Vagina (tissue), 2 donors: ENCODE measurements at regions of chr7 and their contacts with region 1.

Region 1: GRCh38 chr7:100691676-100692577 is 2.1 kb downstream of the GIGYF1 start:
- DNase-seq: peak in 1 of 2 donors; percentile 94
- H3K4me3 ChIP-seq: peak overlapping the region; percentile 91 to 100
- H3K27ac ChIP-seq: peak overlapping the region; percentile 95
- H3K4me1 ChIP-seq: peaks cover 68% of the 10 kb centered on the region
- H3K27me3 ChIP-seq: no peaks in the 10 kb centered on the region
- CTCF ChIP-seq: peak; percentile 66 to 85 (median 81)
- POLR2A ChIP-seq: no peak

Region 2: GRCh38 chr7:100469227-100470044 is 222.5 kb before region 1 on chr7:
- intact Hi-C with region 1: loop called (anchors 5 kb)
- DNase-seq: no peak
- H3K4me3 ChIP-seq: no peak overlapping the region
- H3K27ac ChIP-seq: peak overlapping the region; percentile 42
- H3K4me1 ChIP-seq: peaks cover 62% of the 10 kb centered on the region
- H3K27me3 ChIP-seq: no peaks in the 10 kb centered on the region
- CTCF ChIP-seq: peak; percentile 95 to 98 (median 96)
- POLR2A ChIP-seq: no peak

Region 3: DNA sequence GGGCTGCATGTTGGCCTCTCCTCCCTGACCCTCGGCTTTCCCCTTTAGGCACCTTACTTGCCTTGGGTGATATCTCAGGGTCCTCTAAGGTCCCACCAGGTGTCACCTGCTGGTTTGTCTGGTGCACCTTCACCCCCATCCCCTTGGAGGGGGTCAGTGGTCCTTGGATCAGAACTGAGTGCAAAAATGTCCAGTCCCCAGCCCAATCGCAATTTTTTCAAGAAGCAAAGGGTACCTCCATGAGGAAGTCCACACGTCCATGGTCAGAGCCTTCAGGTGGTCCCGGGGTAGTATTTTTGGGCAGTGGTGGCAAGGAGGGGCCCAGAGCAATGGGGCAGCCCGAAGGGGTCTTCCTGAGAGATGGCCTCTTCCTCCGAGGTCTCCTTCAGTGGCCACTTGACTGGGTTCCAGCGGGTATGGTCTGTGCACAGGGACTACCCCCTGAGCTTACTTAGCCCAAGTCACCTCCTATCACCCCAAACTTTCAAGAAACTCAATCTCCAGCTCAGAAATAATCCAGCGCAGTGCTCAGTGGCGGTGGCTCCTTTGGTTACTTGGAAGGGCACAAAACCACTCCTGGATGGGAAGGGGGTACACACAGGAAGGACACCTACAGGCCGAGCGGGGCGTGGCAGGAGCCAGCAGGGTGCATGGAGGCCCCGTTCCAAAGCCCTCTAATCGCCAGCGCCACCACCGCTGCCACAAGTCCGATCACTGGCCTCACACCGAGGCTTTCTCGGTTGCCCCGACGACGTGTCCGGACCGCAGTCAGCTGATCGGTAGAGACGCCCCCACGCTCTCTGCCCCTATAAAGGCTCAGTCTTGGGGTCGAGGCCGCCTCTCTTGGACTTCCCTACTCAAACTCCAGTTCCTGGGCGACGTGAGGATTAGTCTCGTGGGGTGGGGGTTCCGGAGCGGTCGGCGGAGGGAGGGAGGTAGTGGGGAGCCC is 122.8 kb before region 1 on chr7:
- intact Hi-C with region 1: loop called (anchors 5 kb)
- DNase-seq: no peak
- H3K4me3 ChIP-seq: peak overlapping the region; percentile 21 to 54
- H3K27ac ChIP-seq: peak overlapping the region; percentile 17
- H3K4me1 ChIP-seq: peaks cover 26% of the 10 kb centered on the region
- H3K27me3 ChIP-seq: no peaks in the 10 kb centered on the region
- CTCF ChIP-seq: peak in 2 of 3 experiments; percentile 11 to 18
- POLR2A ChIP-seq: no peak

Region 4: DNA sequence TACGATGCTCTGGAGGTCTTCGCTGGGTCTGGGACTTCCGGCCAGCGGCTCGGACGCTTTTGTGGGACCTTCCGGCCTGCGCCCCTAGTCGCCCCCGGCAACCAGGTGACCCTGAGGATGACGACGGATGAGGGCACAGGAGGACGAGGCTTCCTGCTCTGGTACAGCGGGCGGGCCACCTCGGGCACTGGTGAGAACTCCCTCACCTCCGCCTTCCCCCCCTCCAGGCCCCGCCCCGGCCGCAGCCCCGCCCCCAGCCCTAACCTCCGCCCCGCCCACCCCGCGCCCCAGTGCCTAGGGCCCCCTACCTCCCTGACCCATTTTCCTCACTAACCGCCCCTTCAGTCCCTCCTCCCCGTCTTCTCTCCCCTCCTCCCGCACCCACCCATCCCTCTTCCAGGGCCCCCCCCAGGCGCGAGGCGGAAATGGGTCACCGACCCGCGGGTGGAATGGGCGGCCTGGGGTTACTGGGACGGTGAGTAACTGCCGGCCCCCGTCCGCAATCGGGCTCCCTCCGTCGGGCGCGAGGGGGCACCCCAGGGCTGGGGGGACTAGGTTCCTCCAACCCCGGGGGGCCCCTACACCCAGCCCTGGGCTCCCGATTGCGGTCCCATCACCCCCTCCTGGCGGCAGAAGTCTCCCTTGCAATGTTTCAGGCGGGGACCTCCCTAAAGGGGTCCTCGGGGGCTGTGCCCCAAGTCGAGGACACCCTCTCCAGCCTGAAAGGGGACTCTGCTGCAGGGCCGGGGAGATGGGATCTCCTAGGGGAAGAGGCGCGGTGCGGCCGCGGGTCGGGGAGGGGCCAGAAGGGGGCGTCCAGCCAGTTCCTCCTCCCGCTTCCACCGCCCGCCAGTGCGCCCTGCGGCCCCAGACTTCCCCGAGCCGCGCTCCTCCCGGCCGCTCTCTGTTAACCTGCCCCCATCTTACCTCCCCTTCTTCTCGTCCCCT is 87.6 kb before region 1 on chr7:
- intact Hi-C with region 1: loop called (anchors 5 kb)
- DNase-seq: no peak
- H3K4me3 ChIP-seq: peak overlapping the region; percentile 74 to 86
- H3K27ac ChIP-seq: peak overlapping the region; percentile 93
- H3K4me1 ChIP-seq: peaks cover 26% of the 10 kb centered on the region
- H3K27me3 ChIP-seq: no peaks in the 10 kb centered on the region
- CTCF ChIP-seq: no peak
- POLR2A ChIP-seq: peak in 1 of 2 donors; percentile 83